GM12878 (cell line): ENCODE measurements at regions of chr1 and their contacts with region 1.

Region 1: DNA sequence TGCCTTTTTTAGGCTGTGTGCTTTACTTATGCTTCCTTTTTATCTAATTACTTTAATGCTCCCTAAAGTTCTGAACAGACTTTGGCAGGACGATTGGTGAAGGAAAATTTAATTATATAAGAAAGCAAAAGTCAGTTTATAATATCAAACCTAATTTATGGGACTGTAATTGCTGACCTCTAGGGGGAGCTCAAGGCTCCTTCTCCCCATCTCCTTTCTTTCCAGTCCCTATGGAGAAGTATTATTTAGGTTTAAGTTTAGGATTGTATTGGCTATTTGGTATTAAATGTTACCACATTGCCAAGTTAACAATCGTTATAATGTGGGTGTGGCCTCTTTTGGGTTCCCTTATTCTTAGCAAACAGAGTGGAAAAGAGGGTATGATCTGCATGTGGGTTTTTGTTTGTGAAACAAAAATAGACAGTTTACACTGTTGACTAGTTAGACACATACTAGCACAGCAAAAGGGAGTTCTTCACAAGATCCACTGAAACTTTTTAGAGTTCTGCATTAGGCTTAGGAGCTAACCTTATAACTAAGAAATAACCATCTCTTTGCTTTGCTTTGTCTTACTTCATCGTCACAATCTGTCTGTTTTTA is 48.2 kb upstream of the TNFSF4 start:
- DNase-seq: peak; percentile 16
- ATAC-seq: peak; percentile 67
- H3K4me3 ChIP-seq: no peak overlapping the region
- H3K27ac ChIP-seq: no peak overlapping the region
- H3K4me1 ChIP-seq: peaks cover 4% of the 10 kb centered on the region; the same call in 1 of the 2 replicates
- H3K27me3 ChIP-seq: no peaks in the 10 kb centered on the region
- CTCF ChIP-seq: peak; percentile 67 to 80 (median 70)
- EP300 ChIP-seq: no peak
- POLR2A ChIP-seq: no peak
- RAD21 ChIP-seq: peak; percentile 68

Region 2: GRCh38 chr1:173161510-173162221 is 93.6 kb before region 1 on chr1:
- CTCF ChIA-PET with region 1: no interaction called
- POLR2A ChIA-PET with region 1: no interaction called
- RAD21 ChIA-PET with region 1: no interaction called
- SMC1A ChIA-PET with region 1: no interaction called
- in situ Hi-C with region 1: no loop called
- intact Hi-C with region 1: no loop called
- DNase-seq: no peak
- ATAC-seq: no peak
- H3K4me3 ChIP-seq: no peak overlapping the region
- H3K27ac ChIP-seq: no peak overlapping the region
- H3K4me1 ChIP-seq: no peaks in the 10 kb centered on the region
- H3K27me3 ChIP-seq: no peaks in the 10 kb centered on the region
- CTCF ChIP-seq: no peak
- EP300 ChIP-seq: no peak
- POLR2A ChIP-seq: no peak
- RAD21 ChIP-seq: no peak

Region 3: GRCh38 chr1:173276922-173277800 is 21.8 kb after region 1 on chr1:
- CTCF ChIA-PET with region 1: interaction called, 14 read pairs
- POLR2A ChIA-PET with region 1: no interaction called
- RAD21 ChIA-PET with region 1: no interaction called
- SMC1A ChIA-PET with region 1: interaction called, 4 read pairs
- in situ Hi-C with region 1: no loop called
- intact Hi-C with region 1: no loop called
- DNase-seq: peak; percentile 45
- ATAC-seq: peak; percentile 98
- H3K4me3 ChIP-seq: no peak overlapping the region
- H3K27ac ChIP-seq: no peak overlapping the region
- H3K4me1 ChIP-seq: peaks cover 12% of the 10 kb centered on the region
- H3K27me3 ChIP-seq: no peaks in the 10 kb centered on the region
- CTCF ChIP-seq: no peak
- EP300 ChIP-seq: no peak
- POLR2A ChIP-seq: no peak
- RAD21 ChIP-seq: no peak

Region 4: GRCh38 chr1:173554541-173555250 is 299.4 kb after region 1 on chr1:
- CTCF ChIA-PET with region 1: no interaction called
- POLR2A ChIA-PET with region 1: no interaction called
- RAD21 ChIA-PET with region 1: no interaction called
- SMC1A ChIA-PET with region 1: no interaction called
- in situ Hi-C with region 1: no loop called
- intact Hi-C with region 1: no loop called
- DNase-seq: no peak
- ATAC-seq: no peak
- H3K4me3 ChIP-seq: no peak overlapping the region
- H3K27ac ChIP-seq: no peak overlapping the region
- H3K4me1 ChIP-seq: no peaks in the 10 kb centered on the region
- H3K27me3 ChIP-seq: no peaks in the 10 kb centered on the region
- CTCF ChIP-seq: no peak
- EP300 ChIP-seq: no peak
- POLR2A ChIP-seq: no peak
- RAD21 ChIP-seq: no peak